GM10248 (cell line): ENCODE measurements at regions of chr14 and their contacts with region 1.

Region 1: DNA sequence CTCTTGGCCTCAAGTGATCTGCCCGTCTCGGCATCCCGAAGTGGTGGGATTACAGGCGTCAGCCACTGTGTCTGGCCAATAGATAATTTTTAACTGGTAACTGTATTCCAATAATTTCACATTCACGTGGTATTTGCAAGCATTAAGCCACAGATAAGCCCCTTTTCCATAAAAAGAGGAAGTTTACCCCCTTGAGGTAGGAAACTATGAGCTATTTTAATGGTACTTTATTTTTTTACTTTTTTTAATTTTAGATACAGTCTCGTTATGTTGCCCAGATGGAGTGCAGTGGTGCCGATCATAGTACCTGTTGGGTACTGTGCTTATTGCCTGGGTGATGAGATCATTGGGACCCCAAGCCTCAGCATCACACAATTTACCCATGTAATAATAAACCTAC is 42.9 kb upstream of the AP4S1 start:
- DNase-seq: no peak
- CTCF ChIP-seq: no peak

Region 2: DNA sequence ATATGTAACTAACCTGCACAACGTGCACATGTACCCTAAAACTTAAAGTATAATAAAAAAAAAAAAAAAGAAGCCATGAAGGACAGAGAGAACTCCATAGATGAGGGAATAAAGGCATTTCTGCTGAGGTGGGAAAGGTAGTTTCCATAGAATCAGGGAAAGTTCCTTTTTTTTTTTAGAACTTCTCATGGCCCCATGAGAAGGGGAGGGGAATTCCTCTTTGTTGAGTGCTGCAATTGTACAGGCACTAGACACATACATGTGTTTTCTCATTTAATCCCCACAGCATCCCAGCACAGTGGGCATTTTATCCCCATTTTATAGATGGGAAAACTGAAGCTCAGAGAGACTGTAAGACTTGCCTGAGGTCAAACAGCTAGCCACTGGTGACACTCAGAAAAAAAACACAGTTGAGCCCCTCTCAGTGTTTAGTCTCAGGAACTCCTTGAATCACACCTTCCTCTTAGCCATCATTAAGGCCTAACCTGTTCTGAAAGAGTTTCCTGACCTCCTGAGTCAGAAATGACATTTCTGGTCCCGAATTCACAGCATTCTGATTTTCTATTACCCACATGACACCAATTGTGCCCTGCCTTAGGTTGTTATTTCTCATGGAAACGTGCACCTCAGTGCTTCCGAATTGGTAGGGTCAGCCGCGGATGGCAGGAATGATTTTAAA is 612.9 kb before region 1 on chr14:
- CTCF ChIA-PET with region 1: no interaction called
- POLR2A ChIA-PET with region 1: no interaction called
- DNase-seq: no peak
- CTCF ChIP-seq: no peak

Region 3: GRCh38 chr14:30971586-30971985 is 10.9 kb before region 1 on chr14:
- CTCF ChIA-PET with region 1: interaction called, 15 read pairs
- POLR2A ChIA-PET with region 1: no interaction called
- DNase-seq: no peak
- CTCF ChIP-seq: no peak

Region 4: DNA sequence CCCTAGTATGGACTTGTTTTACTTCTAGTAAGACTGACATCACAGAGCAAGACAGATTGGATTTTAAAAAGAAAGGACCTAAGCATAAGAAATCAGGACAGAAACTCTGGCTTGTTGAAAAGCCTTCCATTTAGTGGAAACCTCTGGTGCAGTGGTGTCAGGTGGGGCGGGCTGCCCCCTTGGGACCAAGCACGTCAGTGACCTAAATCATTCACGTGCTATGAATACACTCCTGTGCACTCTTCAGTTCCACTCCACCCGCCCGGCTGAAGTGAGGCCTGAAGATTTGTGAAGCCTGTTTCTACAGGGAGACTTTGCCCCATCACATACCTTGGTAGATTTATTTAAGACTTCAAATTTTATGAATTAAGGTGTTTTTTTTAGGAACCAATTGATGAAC is 101.9 kb after region 1 on chr14:
- CTCF ChIA-PET with region 1: interaction called, 22 read pairs
- POLR2A ChIA-PET with region 1: no interaction called
- DNase-seq: peak; percentile 47
- CTCF ChIP-seq: no peak